GM10248 (cell line): ENCODE measurements at regions of chr3 and their contacts with region 1.

Region 1: GRCh38 chr3:81302045-81302444 is 459.4 kb downstream of the GBE1 start:
- DNase-seq: peak; percentile 57
- CTCF ChIP-seq: peak; percentile 75

Region 2: GRCh38 chr3:80366808-80367548 is 935.1 kb before region 1 on chr3:
- CTCF ChIA-PET with region 1: no interaction called
- POLR2A ChIA-PET with region 1: no interaction called
- DNase-seq: no peak
- CTCF ChIP-seq: no peak

Region 3: DNA sequence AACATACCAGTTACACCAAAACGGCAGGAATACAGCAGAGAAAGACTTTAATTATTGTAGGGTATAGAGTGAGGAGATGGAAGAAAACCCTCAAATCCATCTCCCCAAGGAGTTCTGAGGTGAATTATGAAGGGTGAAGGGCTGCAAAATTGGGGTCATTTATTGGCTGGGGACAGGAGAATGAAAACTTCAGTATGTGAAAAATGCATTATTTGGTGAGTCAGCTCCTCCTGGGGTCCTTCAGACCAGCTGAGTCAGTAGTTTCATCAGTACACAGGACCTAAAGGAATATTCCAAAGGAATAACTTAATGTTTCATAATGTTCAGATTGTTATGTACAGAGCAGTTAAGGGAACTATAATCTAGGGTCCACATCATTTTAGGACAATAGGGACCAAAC is 106.6 kb before region 1 on chr3:
- CTCF ChIA-PET with region 1: no interaction called
- POLR2A ChIA-PET with region 1: no interaction called
- DNase-seq: no peak
- CTCF ChIP-seq: no peak

Region 4: GRCh38 chr3:81270603-81271371 is 31.3 kb before region 1 on chr3:
- CTCF ChIA-PET with region 1: interaction called, 10 read pairs
- POLR2A ChIA-PET with region 1: no interaction called
- DNase-seq: no peak
- CTCF ChIP-seq: no peak

Region 5: GRCh38 chr3:81289676-81290075 is 12.4 kb before region 1 on chr3:
- CTCF ChIA-PET with region 1: interaction called, 14 read pairs
- POLR2A ChIA-PET with region 1: no interaction called
- DNase-seq: no peak
- CTCF ChIP-seq: no peak

Region 6: DNA sequence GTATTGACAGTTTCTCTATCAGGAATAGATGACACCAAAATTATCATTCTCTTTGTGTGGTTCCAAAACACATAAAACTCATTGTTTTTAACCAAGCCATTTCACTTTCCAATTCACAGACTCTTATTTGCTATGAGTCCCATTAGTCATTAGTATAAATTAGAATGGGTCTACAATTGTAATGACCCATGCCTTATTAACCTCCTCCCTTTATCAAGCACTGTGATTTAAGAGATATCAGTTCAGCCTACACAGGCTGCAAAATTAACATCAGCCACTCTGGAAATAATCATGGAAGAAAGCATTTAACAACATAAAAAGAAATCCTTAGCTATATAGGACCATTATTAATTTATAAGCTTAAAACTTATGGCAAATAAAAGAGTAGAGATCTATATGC is 18.8 kb after region 1 on chr3:
- CTCF ChIA-PET with region 1: interaction called, 12 read pairs
- POLR2A ChIA-PET with region 1: no interaction called
- DNase-seq: no peak
- CTCF ChIP-seq: no peak

Region 7: DNA sequence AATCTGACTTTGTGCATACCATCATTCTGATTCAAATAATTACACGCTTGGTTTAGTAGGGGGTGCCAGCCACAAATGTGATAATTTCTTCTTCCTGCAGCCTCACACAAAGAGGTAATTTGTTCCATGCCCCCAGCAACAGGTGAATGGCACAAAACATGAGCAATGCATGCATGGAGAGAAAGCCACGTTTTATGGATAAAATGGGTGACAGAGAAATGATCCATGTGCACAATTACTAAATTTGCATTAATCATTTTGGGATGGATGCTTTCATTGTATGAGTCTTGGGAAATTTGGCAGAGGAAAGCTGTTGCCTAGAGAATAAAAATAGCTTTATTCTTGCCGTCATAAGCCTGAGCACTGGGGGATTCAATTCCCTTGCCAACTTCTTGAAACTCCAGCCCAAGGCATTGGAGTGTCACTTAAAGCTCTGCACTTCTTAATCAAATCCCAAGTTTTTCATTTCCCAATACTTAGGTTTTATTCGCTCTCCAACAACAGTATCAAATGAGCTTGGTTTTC is 47.8 kb after region 1 on chr3:
- CTCF ChIA-PET with region 1: no interaction called
- POLR2A ChIA-PET with region 1: no interaction called
- DNase-seq: no peak
- CTCF ChIP-seq: no peak

Region 8: DNA sequence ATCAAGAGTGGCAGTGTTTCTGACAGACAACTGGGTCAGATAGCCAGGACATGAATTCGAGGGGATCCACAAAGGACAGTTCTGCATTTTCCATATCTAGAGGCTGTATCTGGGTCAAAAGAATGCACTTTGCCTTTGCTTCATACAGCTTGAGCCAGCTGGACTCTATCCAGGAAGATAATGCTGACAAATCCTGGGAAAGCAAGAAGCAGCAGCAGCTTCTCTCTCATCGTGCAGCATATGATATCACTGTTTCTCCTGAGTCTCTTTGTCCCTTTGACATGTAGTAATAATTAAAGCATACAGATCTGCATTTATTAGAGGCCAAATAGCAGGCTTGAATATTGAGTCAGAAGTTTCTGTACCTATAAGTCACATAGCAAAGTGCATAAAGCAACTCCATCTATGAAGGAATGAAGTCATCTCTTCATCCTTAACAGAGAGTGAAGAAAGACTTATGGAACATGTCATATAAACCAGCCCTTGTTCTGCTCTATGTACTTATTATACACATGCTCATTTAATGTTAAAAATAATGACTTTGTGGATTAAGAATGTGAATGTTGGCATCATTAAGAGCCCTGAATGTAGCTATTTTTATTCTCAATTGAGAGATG is 696.2 kb after region 1 on chr3:
- CTCF ChIA-PET with region 1: no interaction called
- POLR2A ChIA-PET with region 1: no interaction called
- DNase-seq: no peak
- CTCF ChIP-seq: no peak